ENCODE measurements at regions of chr6 and their contacts with region 1.

Region 1: DNA sequence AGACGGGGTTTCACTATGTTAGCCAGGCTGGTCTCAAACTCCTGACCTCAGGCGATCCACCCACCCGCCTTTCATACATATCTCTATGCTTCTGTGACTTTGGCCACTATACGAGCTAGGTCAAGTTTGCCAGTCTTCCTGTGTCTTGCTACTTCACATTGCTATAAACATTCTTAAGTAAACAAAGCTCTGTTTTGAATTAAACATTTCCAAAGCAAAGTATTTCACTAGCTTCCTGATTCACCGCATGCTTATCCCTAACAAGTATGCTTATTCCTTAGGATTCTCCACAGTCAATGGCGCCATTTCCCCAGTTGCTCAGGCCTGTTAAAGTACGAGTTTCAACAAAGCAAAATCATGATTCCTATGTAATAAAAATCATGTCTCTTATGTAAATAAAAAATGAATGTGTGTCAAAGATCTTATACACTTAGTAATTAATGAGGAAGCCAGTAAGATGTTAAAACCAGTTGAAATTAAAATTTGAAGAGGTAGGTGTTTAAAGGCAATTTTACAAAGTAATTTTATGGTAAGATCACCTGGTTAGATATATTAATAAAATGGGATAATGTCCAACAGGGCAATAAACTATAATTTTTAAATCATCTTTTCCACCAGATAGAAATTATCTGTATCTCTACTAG is 88.5 kb downstream of the PRKN start:
- DNase-seq: no peak
- ATAC-seq: no peak

Region 2: DNA sequence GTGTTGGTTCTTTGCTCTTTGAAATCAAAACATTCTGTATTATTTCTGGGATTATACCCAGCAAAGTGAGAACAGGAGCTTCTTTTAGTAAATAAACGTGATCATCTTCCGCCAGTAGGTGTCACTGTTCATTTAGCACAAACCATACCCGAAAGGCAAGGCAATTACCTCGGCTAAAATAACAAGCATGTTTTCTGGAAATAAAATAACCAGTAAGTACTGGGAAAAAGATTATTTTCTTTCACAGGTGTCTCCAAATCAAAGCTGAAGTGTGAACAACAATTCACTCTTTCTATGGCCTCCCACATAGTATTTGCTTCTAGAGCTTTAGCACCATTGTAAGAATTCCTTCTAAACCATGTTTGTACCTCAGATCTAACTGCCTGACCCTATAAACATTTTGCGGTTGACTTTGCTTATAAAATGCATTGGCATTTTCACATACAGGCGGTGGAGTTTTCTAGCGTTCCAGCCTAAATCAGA is 1220.5 kb before region 1 on chr6:
- intact Hi-C with region 1: loop called (anchors 5 kb)
- DNase-seq: no peak
- ATAC-seq: peak; percentile 89

Region 3: DNA sequence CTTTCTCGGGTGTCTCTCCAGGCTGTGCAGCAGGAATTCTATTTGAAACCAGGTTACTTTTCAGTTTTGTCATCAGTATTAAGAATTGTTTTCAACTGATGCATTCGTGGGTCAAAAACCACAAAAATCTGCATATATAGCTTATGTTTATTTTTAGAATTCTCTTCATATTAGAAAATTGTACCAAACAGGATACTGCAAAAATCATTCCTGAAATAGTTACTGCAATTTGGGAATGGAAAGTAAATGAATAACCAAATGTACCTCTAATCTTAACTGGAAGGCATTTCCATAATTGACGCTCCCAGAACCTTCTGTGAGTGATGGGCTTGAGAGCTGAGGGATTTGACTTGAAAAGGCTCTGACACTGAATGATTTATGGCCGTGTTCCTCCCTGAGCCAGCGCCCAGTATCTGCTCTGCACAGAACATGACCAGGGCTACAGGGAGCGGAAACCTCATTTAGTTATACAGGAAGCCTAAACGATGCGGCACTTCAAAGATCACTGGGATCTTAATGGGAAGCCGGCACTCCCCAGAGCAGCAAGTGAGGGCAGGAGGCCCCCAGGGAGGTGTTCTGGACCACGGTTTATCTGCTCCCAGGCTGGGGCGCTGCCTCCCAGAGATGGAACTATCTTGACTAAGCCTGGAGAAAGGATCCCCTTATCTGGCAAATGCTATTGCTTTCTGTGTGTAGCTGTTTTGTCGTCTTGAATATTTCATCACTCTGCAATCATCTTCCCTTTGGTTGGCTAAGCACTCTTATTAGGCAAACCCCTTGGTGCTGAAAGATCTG is 1221.4 kb after region 1 on chr6:
- intact Hi-C with region 1: no loop called
- DNase-seq: no peak
- ATAC-seq: peak; percentile 79

Measured in sciatic nerve (tissue), 2 donors.